Activated CD4-positive, alpha-beta T cell treated with anti-CD3 and anti-CD28 coated beads, Interleukin-2, amount 10 ng/mL, durations not matched to agents 24 days and 14 days (primary cell): ENCODE measurements at regions of chr10 and their contacts with region 1.

Region 1: GRCh38 chr10:122374237-122374869 is at the start of gene PLEKHA1:
- DNase-seq: peak; percentile 98
- H3K4me3 Mint-ChIP-seq: peak within 1 kb of the TSS; percentile 87
- H3K27ac Mint-ChIP-seq: peak within 1 kb of the TSS; percentile 92
- H3K4me1 Mint-ChIP-seq: peaks cover 17% of the 10 kb centered on the region
- H3K27me3 Mint-ChIP-seq: peaks cover 64% of the 10 kb centered on the region
- total RNA-seq, gene PLEKHA1: 3.5 and 4.1 TPM in 2 replicates

Region 2: GRCh38 chr10:122362621-122363020 is 11.7 kb before region 1 on chr10:
- intact Hi-C with region 1: no loop called
- DNase-seq: no peak
- H3K4me3 Mint-ChIP-seq: no peak overlapping the region
- H3K27ac Mint-ChIP-seq: no peak overlapping the region
- H3K4me1 Mint-ChIP-seq: no peaks in the 10 kb centered on the region
- H3K27me3 Mint-ChIP-seq: peaks cover 16% of the 10 kb centered on the region

Region 3: DNA sequence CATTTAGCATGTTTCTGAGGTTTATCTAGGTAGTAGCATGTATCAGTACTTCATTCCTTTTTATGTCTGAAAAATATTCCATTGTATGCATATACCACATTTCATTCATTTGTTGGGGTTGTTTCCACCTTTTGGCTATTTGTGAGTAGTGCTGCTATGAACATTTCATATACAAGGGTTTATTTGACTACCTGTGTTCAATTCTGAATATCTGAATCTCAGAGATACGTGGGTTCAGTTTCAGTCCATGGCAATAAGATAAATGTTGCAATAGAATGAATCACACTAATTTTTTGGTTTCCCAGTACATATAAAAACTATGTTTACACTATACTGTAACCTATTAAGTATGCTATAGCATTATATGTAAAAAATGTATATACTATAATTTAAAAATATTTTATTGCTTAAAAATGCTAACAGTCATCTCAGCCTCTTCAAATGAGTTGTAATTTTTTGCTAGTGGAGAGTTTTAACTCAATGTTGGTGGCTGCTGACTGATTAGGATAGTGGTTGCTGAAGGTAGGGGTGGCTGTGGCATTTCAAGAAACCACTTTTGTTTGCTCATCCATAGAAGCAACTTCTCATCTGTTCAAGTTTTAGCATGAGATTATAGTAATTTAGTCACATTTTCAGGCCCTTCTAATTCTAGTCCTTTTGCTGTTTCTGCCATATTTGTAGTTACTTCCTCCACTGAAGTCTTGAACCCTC is 14.1 kb after region 1 on chr10:
- intact Hi-C with region 1: loop called (anchors 1 kb)
- DNase-seq: no peak
- H3K4me3 Mint-ChIP-seq: no peak overlapping the region
- H3K27ac Mint-ChIP-seq: no peak overlapping the region
- H3K4me1 Mint-ChIP-seq: peaks cover 4% of the 10 kb centered on the region
- H3K27me3 Mint-ChIP-seq: peaks cover 27% of the 10 kb centered on the region

Region 4: DNA sequence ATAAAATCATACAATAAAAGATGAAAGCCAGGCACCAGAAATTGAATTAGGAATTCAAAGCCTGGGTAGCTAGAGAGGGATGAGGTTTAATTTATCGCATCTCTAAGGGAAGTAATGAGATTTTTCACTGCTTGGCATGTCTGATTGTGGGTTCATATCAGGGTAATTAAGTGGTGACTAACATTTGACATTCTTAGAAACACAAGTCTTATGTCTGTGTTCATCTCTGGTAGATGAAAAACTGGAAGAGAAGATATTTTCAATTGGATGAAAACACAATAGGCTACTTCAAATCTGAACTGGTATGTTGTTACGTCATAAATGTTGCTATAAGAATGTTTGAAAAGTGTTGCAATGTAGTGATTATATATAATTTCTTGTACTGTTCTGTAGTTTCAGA is 43.3 kb after region 1 on chr10:
- intact Hi-C with region 1: loop called (anchors 1 kb)
- DNase-seq: no peak
- H3K4me3 Mint-ChIP-seq: no peak overlapping the region
- H3K27ac Mint-ChIP-seq: no peak overlapping the region
- H3K4me1 Mint-ChIP-seq: peaks cover 29% of the 10 kb centered on the region
- H3K27me3 Mint-ChIP-seq: peaks cover 2% of the 10 kb centered on the region

Region 5: GRCh38 chr10:122435212-122435827 is 61.0 kb after region 1 on chr10:
- intact Hi-C with region 1: no loop called
- DNase-seq: peak; percentile 64
- H3K4me3 Mint-ChIP-seq: no peak overlapping the region
- H3K27ac Mint-ChIP-seq: no peak overlapping the region
- H3K4me1 Mint-ChIP-seq: no peaks in the 10 kb centered on the region
- H3K27me3 Mint-ChIP-seq: peaks cover 1% of the 10 kb centered on the region

Region 6: DNA sequence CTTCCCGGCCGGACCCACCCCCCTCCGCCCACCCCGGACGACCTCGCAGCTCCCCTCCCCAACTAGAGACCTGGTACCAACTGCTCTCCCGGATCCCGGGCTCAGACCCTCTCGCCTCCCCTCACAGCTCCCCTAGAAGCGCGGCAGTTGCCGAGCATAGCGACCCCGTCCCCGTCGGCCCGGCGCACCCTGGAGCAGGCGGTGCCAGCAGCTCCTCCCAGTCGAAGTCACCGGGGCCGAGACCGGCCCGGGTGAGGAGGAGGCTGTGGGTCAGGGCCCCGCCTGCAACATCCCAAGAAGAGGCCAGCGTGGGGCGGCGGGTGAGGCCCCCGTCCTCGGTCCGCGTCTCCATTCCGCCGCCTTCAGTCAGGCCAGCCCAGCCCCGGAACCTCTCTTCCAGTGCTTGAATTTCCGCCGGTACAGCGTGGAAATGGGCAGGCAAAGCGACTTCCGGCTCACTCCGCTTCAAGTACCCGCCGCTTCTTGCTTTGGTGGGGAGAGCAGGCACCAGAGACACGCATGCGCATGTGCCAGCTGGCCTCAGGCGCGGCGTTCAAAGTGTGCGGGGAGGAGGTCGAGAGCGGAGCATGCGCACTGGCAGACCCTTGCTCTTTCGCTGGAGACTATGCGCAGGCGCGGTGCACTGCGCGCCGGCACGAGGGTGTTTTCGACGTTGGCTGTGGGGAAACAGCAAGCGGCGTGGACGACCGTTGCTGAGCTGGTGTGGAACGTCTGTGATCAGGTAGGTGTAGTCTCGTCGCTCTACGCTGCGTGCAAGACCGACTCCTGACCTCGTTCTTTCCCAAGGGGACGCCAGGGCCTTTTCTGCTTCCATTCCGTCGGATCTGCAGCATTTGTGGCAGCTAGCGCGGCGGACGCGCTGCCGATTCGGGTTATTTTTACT is 579.7 kb after region 1 on chr10 and contains the start of gene C10orf88:
- intact Hi-C with region 1: loop called (anchors 10 kb)
- DNase-seq: peak; percentile 99
- H3K4me3 Mint-ChIP-seq: peak within 1 kb of the TSS; percentile 91
- H3K27ac Mint-ChIP-seq: peak within 1 kb of the TSS; percentile 92
- H3K4me1 Mint-ChIP-seq: peaks cover 22% of the 10 kb centered on the region
- H3K27me3 Mint-ChIP-seq: peaks cover 15% of the 10 kb centered on the region
- total RNA-seq, gene C10orf88: 13.9 and 15.7 TPM in 2 replicates